Right cardiac atrium (tissue), 5 donors: ENCODE measurements at regions of chr7 and their contacts with region 1.

Region 1: GRCh38 chr7:124399941-124400340 is 365.7 kb downstream of the GPR37 start:
- DNase-seq: no peak
- ATAC-seq: no peak
- H3K4me3 ChIP-seq: no peak overlapping the region
- H3K27ac ChIP-seq: no peak overlapping the region
- H3K4me1 ChIP-seq: no peaks in the 10 kb centered on the region
- H3K27me3 ChIP-seq: no peaks in the 10 kb centered on the region

Region 2: GRCh38 chr7:124429923-124430322 is 30.0 kb after region 1 on chr7:
- intact Hi-C with region 1: loop called in 1 of 4 experiments (anchors 5 kb)
- DNase-seq: no peak
- ATAC-seq: no peak
- H3K4me3 ChIP-seq: no peak overlapping the region
- H3K27ac ChIP-seq: no peak overlapping the region
- H3K4me1 ChIP-seq: no peaks in the 10 kb centered on the region
- H3K27me3 ChIP-seq: no peaks in the 10 kb centered on the region